CD8-positive, alpha-beta memory T cell (primary cell): ENCODE measurements at regions of chr18 and their contacts with region 1.

Region 1: GRCh38 chr18:49486953-49487710 is at the start of gene C18orf32:
- DNase-seq: peak; percentile 90 to 96 (median 94)
- H3K4me3 ChIP-seq: peak within 1 kb of the TSS; percentile 75
- H3K4me3 Mint-ChIP-seq: peak within 1 kb of the TSS; percentile 93 to 98 (median 96)
- H3K27ac ChIP-seq: peak within 1 kb of the TSS; percentile 78
- H3K27ac Mint-ChIP-seq: peak within 1 kb of the TSS; percentile 82 to 99 (median 98)
- H3K4me1 ChIP-seq: peaks cover 52% of the 10 kb centered on the region
- H3K4me1 Mint-ChIP-seq: peaks cover 63 to 89% (median 82%) of the 10 kb centered on the region in 3 donors
- H3K27me3 ChIP-seq: no peaks in the 10 kb centered on the region
- H3K27me3 Mint-ChIP-seq: peaks cover 0 to 1% of the 10 kb centered on the region in 2 donors
- total RNA-seq, gene C18orf32: 23.4 to 25.4 TPM

Region 2: DNA sequence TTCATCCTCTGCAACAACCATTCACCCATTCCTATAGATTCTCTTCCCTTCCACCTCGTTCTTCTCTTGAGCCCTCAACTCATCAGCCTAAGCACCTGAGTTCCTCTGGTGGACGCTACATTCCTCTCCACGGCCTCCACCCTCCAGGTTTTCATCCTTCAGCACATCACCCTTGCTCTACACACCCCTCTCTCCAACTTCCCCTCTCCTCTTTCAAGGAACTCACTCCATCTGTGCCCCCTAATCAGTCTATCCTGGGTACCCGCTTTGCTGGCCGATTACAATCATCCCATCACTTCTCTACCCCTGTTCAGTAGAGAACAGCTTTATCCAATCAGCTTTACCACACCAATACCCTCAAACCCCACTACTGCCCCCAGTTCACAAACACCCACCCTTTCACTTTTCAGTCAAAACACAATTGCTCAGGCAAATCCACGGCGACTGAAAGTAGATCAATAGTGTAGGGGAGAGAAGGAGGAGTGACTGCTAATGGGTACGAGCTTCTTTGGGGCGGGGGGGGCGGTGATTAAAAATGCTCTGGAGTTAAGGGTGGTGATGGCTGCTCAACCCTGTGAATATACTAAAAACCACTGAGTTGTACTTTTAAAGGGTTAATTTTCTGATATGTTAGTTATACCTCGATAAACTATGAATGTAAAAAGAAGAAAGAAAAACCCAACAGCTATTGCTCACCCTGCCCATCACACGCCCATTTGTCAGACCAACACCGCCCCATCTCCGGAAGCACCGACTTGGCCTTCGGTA is 27.5 kb before region 1 on chr18:
- CTCF ChIA-PET with region 1: interaction called, 9 read pairs
- POLR2A ChIA-PET with region 1: interaction called, 43 read pairs
- DNase-seq: peak in 1 of 5 donors; percentile 1
- H3K4me3 ChIP-seq: peak overlapping the region; percentile 93
- H3K4me3 Mint-ChIP-seq: peak overlapping the region; percentile 85 to 96 (median 93)
- H3K27ac ChIP-seq: peak overlapping the region; percentile 75
- H3K27ac Mint-ChIP-seq: peak overlapping the region; percentile 18 to 90 (median 64)
- H3K4me1 ChIP-seq: peaks cover 29% of the 10 kb centered on the region
- H3K4me1 Mint-ChIP-seq: peaks cover 41 to 60% (median 56%) of the 10 kb centered on the region in 3 donors
- H3K27me3 ChIP-seq: no peaks in the 10 kb centered on the region
- H3K27me3 Mint-ChIP-seq: peaks cover 0 to 1% of the 10 kb centered on the region in 2 donors